ENCODE measurements at regions of chr7 and their contacts with region 1.

Region 1: DNA sequence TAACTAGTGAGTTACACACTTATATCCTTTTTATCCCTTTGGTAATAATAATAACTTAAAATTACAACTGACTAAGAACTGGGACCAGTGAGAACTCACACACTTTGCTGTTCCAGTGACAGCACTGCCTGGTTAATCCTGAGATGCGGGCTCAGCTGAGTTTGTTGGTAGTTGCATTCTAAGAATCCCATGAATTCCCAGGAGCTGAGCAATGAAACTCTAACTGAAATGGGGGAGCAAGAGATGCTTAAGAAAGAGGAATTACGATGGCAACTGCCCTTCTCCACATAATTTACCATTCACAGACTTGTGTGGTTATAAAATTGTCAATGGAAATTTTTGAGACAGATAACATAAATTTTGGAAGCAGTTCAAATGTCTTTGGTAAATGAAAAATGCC is 659.4 kb downstream of the MAGI2 start:
- DNase-seq: no peak
- ATAC-seq: no peak
- H3K4me3 ChIP-seq: no peak overlapping the region
- H3K4me3 Mint-ChIP-seq: no peak overlapping the region
- H3K27ac ChIP-seq: no peak overlapping the region
- H3K27ac Mint-ChIP-seq: no peak overlapping the region
- H3K4me1 ChIP-seq: no peaks in the 10 kb centered on the region
- H3K4me1 Mint-ChIP-seq: no peaks in the 10 kb centered on the region
- H3K27me3 ChIP-seq: no peaks in the 10 kb centered on the region
- H3K27me3 Mint-ChIP-seq: no peaks in the 10 kb centered on the region
- CTCF ChIP-seq: no peak

Region 2: DNA sequence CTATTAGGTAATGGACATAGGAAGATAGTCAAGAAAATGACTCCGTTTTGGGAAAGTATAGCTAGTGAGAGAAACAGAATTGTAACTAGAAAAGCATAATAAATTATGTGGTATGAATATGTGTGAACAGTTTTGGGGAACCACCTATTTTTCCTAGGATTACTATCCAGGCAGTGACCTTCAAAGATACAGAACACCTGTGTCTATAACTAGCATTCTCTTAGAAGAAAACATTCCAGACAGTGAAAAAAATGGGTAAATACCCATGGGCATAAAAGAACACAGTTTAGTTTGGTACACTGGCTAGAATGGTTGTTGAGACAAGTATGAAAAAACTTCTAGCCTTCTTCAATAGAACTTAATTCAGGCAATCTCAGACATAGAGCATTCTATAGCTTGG is 31.5 kb before region 1 on chr7:
- CTCF ChIA-PET with region 1: no interaction called
- POLR2A ChIA-PET with region 1: no interaction called
- intact Hi-C with region 1: loop called in 1 of 2 experiments (anchors 1 kb)
- DNase-seq: no peak
- ATAC-seq: no peak
- H3K4me3 ChIP-seq: no peak overlapping the region
- H3K4me3 Mint-ChIP-seq: no peak overlapping the region
- H3K27ac ChIP-seq: no peak overlapping the region
- H3K27ac Mint-ChIP-seq: no peak overlapping the region
- H3K4me1 ChIP-seq: no peaks in the 10 kb centered on the region
- H3K4me1 Mint-ChIP-seq: no peaks in the 10 kb centered on the region
- H3K27me3 ChIP-seq: no peaks in the 10 kb centered on the region
- H3K27me3 Mint-ChIP-seq: no peaks in the 10 kb centered on the region
- CTCF ChIP-seq: no peak

Region 3: GRCh38 chr7:80794631-80795573 is 2000.8 kb after region 1 on chr7:
- CTCF ChIA-PET with region 1: no interaction called
- POLR2A ChIA-PET with region 1: no interaction called
- intact Hi-C with region 1: no loop called
- DNase-seq: no peak
- ATAC-seq: no peak
- H3K4me3 ChIP-seq: no peak overlapping the region
- H3K4me3 Mint-ChIP-seq: no peak overlapping the region
- H3K27ac ChIP-seq: no peak overlapping the region
- H3K27ac Mint-ChIP-seq: no peak overlapping the region
- H3K4me1 ChIP-seq: no peaks in the 10 kb centered on the region
- H3K4me1 Mint-ChIP-seq: no peaks in the 10 kb centered on the region
- H3K27me3 ChIP-seq: no peaks in the 10 kb centered on the region
- H3K27me3 Mint-ChIP-seq: no peaks in the 10 kb centered on the region
- CTCF ChIP-seq: no peak

Measured in CD4-positive, alpha-beta T cell (primary cell).